Motor neuron (in vitro differentiated cells): ENCODE measurements at regions of chrX and their contacts with region 1.

Region 1: DNA sequence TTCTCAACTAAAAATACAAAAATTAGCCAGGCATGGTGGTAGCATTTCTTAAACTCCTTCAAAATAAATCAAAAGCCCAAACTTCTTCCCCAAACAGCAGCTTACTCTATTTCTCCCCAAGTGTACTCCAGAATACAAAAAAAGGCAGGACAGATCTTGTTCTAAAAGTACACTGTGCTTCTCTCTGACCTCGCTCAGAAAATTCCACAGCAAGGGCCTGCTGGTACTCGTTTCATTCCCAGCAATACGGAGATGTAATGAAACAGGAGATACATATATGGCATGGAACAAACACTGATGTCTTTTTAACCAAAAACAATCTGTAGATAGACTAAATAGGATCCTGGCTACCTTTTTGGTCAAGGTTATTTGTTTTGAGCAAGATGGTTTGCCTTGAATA is 25.2 kb downstream of the MAP7D2 start:
- ATAC-seq: no peak
- H3K4me3 ChIP-seq: no peak overlapping the region
- H3K27ac ChIP-seq: no peak overlapping the region
- H3K4me1 ChIP-seq: no peaks in the 10 kb centered on the region

Region 2: GRCh38 chrX:19739683-19740082 is 351.8 kb before region 1 on chrX:
- in situ Hi-C with region 1: no loop called
- ATAC-seq: peak in 5 of 8 experiments; percentile 55 to 88 (median 74)
- H3K4me3 ChIP-seq: no peak overlapping the region
- H3K27ac ChIP-seq: no peak overlapping the region
- H3K4me1 ChIP-seq: peaks cover 13 to 15% of the 10 kb centered on the region in 2 donors

Region 3: GRCh38 chrX:19904778-19905367 is 186.6 kb before region 1 on chrX:
- in situ Hi-C with region 1: loop called in 1 of 9 experiments (anchors 25 kb)
- ATAC-seq: peak in 6 of 8 experiments; percentile 45 to 67 (median 54)
- H3K4me3 ChIP-seq: no peak overlapping the region
- H3K27ac ChIP-seq: no peak overlapping the region
- H3K4me1 ChIP-seq: no peaks in the 10 kb centered on the region